ENCODE measurements at regions of chr3 and their contacts with region 1.

Region 1: DNA sequence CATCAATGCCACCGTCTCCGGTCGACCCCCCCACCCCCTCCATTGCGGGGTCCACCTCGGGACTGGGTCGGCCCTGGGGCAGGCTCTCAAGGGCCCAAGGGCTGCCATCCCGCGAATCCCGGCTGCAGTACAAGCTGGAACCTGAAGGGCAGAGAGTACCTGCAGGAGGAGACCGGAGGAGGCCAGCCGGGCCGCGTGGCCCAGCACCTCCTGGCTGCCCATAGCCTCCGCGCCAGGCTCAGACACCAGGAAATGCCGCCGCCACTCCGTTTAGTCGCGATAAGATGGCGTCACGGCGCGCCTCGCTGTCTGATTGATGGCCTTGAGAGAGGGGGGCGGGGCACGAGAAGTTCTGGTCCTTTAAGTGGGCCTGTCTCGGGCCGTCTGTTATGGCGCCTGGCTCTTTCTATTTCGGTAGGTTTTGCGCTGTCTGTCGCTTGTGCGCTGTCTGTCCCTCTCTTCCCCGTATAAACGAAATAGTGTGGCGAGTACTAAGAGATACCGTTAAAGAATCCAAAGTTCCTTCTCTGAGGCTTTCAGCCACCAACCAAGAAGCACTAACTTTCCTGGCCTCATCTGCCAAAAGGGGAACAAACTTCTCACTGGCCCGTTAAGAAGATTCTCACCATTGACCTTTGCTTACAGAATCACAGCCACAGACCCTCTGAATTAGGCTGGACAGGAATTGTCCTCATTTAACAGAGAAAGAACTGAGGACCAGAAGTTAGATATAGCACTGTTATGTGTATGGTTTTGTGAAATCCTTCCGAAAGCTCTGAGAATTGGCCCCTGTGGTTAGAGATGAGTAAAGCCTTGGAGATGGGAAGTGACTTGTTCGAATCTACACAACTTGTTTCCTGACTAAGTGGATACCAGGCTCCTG is at the start of gene RFT1:
- DNase-seq: peak; percentile 99
- ATAC-seq: peak; percentile 93
- H3K4me3 Mint-ChIP-seq: peak within 1 kb of the TSS; percentile 98
- H3K27ac Mint-ChIP-seq: peak within 1 kb of the TSS; percentile 95
- H3K4me1 Mint-ChIP-seq: peaks cover 22% of the 10 kb centered on the region
- H3K27me3 Mint-ChIP-seq: no peaks in the 10 kb centered on the region
- total RNA-seq, gene RFT1: 39.8 to 49.0 TPM

Region 2: DNA sequence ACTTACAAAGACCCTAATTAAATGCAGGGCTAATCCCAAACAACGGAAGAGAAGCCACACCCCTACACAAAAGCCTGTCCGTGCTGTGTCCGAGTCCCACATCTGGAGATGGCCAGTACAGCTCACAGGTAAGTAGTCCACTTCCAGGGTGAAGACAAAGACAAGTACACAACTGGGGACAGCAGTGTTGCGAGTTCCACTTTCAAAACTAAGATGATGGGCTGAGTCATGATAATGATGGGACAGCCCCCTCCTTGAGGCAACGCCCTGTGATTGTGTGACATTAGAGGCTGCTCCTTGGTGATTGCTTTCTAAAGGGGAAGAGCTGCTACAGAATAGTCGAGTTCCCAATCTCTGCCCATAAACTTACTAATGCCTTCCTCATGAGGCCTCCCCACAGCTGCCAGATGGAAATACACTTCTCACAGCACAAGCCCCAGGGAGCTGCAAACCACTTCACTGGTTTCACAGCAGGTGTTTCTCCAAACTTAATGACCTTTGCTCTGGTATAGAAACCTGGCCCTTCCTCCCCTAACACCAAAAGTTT is 27.7 kb before region 1 on chr3:
- CTCF ChIA-PET with region 1: interaction called, 4 read pairs
- POLR2A ChIA-PET with region 1: interaction called, 6 read pairs
- intact Hi-C with region 1: loop called in 1 of 2 experiments (anchors 2 kb)
- DNase-seq: peak; percentile 79
- ATAC-seq: peak; percentile 96
- H3K4me3 Mint-ChIP-seq: peak overlapping the region; percentile 44
- H3K27ac Mint-ChIP-seq: peak overlapping the region; percentile 89
- H3K4me1 Mint-ChIP-seq: peaks cover 75% of the 10 kb centered on the region
- H3K27me3 Mint-ChIP-seq: no peaks in the 10 kb centered on the region

Region 3: GRCh38 chr3:53114011-53114400 is 16.4 kb before region 1 on chr3:
- CTCF ChIA-PET with region 1: interaction called, 38 read pairs
- POLR2A ChIA-PET with region 1: interaction called, 3 read pairs
- intact Hi-C with region 1: loop called (anchors 1 kb)
- DNase-seq: peak; percentile 91
- ATAC-seq: peak; percentile 49
- H3K4me3 Mint-ChIP-seq: no peak overlapping the region
- H3K27ac Mint-ChIP-seq: no peak overlapping the region
- H3K4me1 Mint-ChIP-seq: peaks cover 15% of the 10 kb centered on the region
- H3K27me3 Mint-ChIP-seq: no peaks in the 10 kb centered on the region

Region 4: DNA sequence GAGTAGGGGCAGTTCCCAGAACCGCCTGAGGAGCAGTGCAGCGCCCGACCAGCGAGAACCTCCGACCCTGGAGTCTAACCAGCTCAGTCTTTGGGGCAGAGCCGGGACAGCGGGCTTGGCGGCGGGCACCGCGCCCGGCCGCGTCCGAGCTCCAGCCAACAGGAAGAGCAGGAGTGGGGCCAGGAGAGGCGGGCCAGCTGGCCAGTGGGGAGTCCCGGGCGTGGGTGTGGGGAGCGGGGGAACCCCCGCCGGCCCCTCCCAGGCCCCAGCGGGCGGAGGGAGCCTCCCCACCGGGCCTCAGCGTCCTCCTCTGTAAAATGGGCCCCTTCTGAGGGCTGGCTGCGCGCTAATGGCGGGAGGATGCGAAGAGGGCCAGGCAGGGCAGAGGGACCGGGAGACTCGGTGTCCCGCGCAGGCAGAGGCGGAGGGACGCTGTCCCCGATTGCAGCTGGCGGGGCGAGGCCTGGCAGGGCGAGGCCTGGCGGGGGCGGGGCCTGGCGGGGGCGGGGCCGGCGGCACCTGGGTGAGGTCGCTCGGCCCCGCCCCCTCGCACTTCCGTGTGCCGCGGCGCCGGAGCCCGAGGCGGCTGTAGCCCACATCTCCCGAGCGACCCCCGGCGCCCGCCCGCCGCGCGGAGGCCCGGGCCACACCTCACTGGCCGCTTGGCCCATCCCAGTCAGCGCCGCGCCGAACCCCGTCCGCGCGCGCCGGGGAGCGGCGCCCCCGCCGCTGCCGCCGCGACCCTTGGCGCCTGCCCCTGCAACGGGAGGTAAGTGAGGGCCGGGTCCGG is 30.4 kb after region 1 on chr3 and contains the start of gene PRKCD:
- CTCF ChIA-PET with region 1: interaction called, 8 read pairs
- POLR2A ChIA-PET with region 1: interaction called, 3 read pairs
- intact Hi-C with region 1: loop called (anchors 1 to 2 kb)
- DNase-seq: peak; percentile 91
- ATAC-seq: peak; percentile 75
- H3K4me3 Mint-ChIP-seq: peak within 1 kb of the TSS; percentile 75
- H3K27ac Mint-ChIP-seq: peak within 1 kb of the TSS; percentile 83
- H3K4me1 Mint-ChIP-seq: peaks cover 19% of the 10 kb centered on the region
- H3K27me3 Mint-ChIP-seq: peaks cover 10% of the 10 kb centered on the region
- total RNA-seq, gene PRKCD: 22.0 to 26.5 TPM

Region 5: GRCh38 chr3:53255775-53256703 is 125.6 kb after region 1 on chr3 and contains the start of gene TKT:
- CTCF ChIA-PET with region 1: no interaction called
- POLR2A ChIA-PET with region 1: no interaction called
- intact Hi-C with region 1: loop called in 1 of 2 experiments (anchors 1 kb)
- DNase-seq: peak; percentile 92
- ATAC-seq: peak; percentile 85
- H3K4me3 Mint-ChIP-seq: peak within 1 kb of the TSS; percentile 87
- H3K27ac Mint-ChIP-seq: peak within 1 kb of the TSS; percentile 53
- H3K4me1 Mint-ChIP-seq: peaks cover 32% of the 10 kb centered on the region
- H3K27me3 Mint-ChIP-seq: no peaks in the 10 kb centered on the region
- total RNA-seq, gene TKT: 320 to 418 TPM

Region 6: DNA sequence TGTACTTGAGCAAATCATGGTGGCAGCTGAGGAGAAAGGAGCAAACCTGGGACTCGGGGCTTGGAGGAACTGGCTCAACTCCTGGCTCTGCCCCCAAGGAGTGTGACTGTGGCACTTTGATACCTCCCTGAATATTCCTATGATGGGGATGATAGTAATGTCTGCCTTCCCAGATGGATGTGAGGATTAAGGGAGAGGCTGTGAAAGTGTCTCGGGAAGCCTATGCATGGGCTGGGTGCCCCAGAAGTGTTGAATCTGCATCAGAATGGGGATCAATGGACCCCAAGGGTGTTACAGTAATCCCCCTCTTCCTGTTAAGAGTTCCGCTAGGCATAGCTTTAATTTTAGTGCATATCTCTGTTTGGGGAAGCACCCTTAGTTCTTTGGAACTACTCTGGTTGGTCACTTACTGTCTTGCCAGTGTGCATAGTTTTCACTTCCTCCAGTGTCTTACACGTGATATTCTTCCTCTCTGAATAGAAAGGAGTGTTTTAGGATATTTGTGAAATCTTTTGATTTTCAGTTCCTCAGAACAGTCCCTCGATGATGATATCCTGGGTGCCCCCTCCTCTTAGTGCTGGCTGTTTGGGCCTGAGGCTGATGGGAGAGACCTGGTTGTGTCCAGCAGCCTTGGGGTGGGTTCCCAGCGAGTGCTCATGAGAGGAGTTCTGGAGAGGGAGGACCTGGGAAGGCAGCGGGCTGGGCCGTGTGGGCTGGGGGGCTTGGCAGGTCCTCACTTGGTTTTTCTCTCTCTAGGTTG is 618.3 kb after region 1 on chr3:
- CTCF ChIA-PET with region 1: no interaction called
- POLR2A ChIA-PET with region 1: no interaction called
- intact Hi-C with region 1: no loop called
- DNase-seq: no peak
- ATAC-seq: no peak
- H3K4me3 Mint-ChIP-seq: no peak overlapping the region
- H3K27ac Mint-ChIP-seq: no peak overlapping the region
- H3K4me1 Mint-ChIP-seq: peaks cover 5% of the 10 kb centered on the region
- H3K27me3 Mint-ChIP-seq: peaks cover 5% of the 10 kb centered on the region

Region 7: GRCh38 chr3:53881691-53882593 is 751.5 kb after region 1 on chr3 and contains the start of gene ACTR8:
- CTCF ChIA-PET with region 1: no interaction called
- POLR2A ChIA-PET with region 1: no interaction called
- intact Hi-C with region 1: loop called in 1 of 2 experiments (anchors 10 kb)
- DNase-seq: peak; percentile 90
- ATAC-seq: peak; percentile 92
- H3K4me3 Mint-ChIP-seq: peak within 1 kb of the TSS; percentile 100
- H3K27ac Mint-ChIP-seq: peak within 1 kb of the TSS; percentile 99
- H3K4me1 Mint-ChIP-seq: peaks cover 20% of the 10 kb centered on the region
- H3K27me3 Mint-ChIP-seq: no peaks in the 10 kb centered on the region
- total RNA-seq, gene ACTR8: 26.0 to 28.9 TPM